Naive thymus-derived CD4-positive, alpha-beta T cell (primary cell): ENCODE measurements at regions of chr21 and their contacts with region 1.

Region 1: GRCh38 chr21:29002442-29003144 is 9.9 kb upstream of the LTN1 start:
- DNase-seq: peak; percentile 90 to 96 (median 94)
- ATAC-seq: peak; percentile 100
- H3K4me3 ChIP-seq: peak overlapping the region; percentile 86
- H3K4me3 Mint-ChIP-seq: peak overlapping the region; percentile 85 to 95 (median 93)
- H3K27ac ChIP-seq: peak overlapping the region; percentile 92
- H3K27ac Mint-ChIP-seq: peak overlapping the region; percentile 97 to 99 (median 99)
- H3K4me1 ChIP-seq: peaks cover 0 to 3% of the 10 kb centered on the region in 2 donors
- H3K4me1 Mint-ChIP-seq: peaks cover 0 to 22% (median 10%) of the 10 kb centered on the region in 7 donors
- H3K27me3 ChIP-seq: no peaks in the 10 kb centered on the region
- H3K27me3 Mint-ChIP-seq: no peaks in the 10 kb centered on the region

Region 2: DNA sequence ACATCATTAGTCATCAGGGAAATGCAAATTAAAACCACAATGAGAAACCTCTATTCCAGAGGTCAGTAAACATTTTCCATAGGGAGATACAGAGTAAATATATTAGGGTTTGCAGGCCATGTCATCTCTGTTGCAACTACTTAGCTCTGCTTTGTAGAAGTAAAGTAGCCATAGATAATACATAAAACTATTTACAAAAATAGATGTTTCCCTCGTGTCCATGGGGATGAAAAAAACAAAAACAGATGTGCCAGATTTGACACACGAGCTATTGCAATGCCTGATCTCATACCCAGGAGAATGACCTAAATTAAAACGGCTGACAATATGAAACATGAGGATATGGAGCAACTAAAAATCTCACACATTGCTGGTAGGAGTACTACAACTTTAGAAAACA is 27.2 kb before region 1 on chr21:
- CTCF ChIA-PET with region 1: no interaction called
- POLR2A ChIA-PET with region 1: interaction called, 14 read pairs
- intact Hi-C with region 1: no loop called
- DNase-seq: no peak
- ATAC-seq: no peak
- H3K4me3 ChIP-seq: no peak overlapping the region
- H3K4me3 Mint-ChIP-seq: no peak overlapping the region
- H3K27ac ChIP-seq: no peak overlapping the region
- H3K27ac Mint-ChIP-seq: no peak overlapping the region
- H3K4me1 ChIP-seq: no peaks in the 10 kb centered on the region
- H3K4me1 Mint-ChIP-seq: peaks cover 5 to 29% (median 12%) of the 10 kb centered on the region in 7 donors
- H3K27me3 ChIP-seq: no peaks in the 10 kb centered on the region
- H3K27me3 Mint-ChIP-seq: no peaks in the 10 kb centered on the region